Pancreas (tissue), 10 donors: ENCODE measurements at regions of chr21 and their contacts with region 1.

Region 1: GRCh38 chr21:34996304-34997101 is 52.6 kb downstream of the RUNX1 start:
- DNase-seq: no peak
- ATAC-seq: peak in 3 of 4 donors; percentile 26 to 64 (median 44)
- H3K4me3 ChIP-seq: no peak overlapping the region
- H3K27ac ChIP-seq: no peak overlapping the region
- H3K4me1 ChIP-seq: no peaks in the 10 kb centered on the region
- H3K27me3 ChIP-seq: no peaks in the 10 kb centered on the region
- CTCF ChIP-seq: no peak

Region 2: DNA sequence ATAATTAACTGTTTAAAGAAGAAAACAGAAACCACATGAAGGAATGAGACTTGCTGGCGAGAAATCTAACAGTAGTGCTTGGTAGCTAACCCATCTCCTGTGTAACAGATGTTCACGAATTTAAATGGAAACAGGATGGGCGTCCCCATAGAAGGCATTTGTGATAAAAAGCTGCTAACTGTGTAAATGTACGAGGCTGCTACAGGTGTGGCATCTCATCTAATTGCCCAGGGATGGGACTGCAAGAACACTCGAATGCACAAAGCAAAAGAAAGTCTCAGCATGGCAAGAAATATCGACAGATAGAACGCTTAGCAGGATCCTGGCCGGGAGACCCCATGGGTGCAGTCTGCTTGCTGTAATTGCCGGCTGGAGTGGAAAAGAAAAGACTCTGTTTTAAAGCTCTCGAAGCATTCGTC is 60.1 kb before region 1 on chr21:
- intact Hi-C with region 1: no loop called
- DNase-seq: no peak
- ATAC-seq: no peak
- H3K4me3 ChIP-seq: no peak overlapping the region
- H3K27ac ChIP-seq: no peak overlapping the region
- H3K4me1 ChIP-seq: no peaks in the 10 kb centered on the region
- H3K27me3 ChIP-seq: peaks cover 0 to 3% (median 0%) of the 10 kb centered on the region in 4 donors
- CTCF ChIP-seq: no peak

Region 3: GRCh38 chr21:35015435-35016024 is 19.0 kb after region 1 on chr21:
- intact Hi-C with region 1: loop called in 1 of 3 experiments (anchors 2 kb)
- DNase-seq: no peak
- ATAC-seq: no peak
- H3K4me3 ChIP-seq: no peak overlapping the region
- H3K27ac ChIP-seq: no peak overlapping the region
- H3K4me1 ChIP-seq: peaks cover 0 to 9% (median 7%) of the 10 kb centered on the region in 3 donors
- H3K27me3 ChIP-seq: no peaks in the 10 kb centered on the region
- CTCF ChIP-seq: no peak